ENCODE measurements at regions of chr11 and their contacts with region 1.

Region 1: GRCh38 chr11:63478896-63479295 is 12.1 kb downstream of the PLAAT5 start:
- DNase-seq: peak; percentile 23 to 78 (median 56)
- ATAC-seq: peak; percentile 78
- H3K4me3 ChIP-seq: no peak overlapping the region
- H3K4me3 Mint-ChIP-seq: no peak overlapping the region
- H3K27ac ChIP-seq: no peak overlapping the region
- H3K27ac Mint-ChIP-seq: no peak overlapping the region
- H3K4me1 ChIP-seq: peaks cover 3% of the 10 kb centered on the region
- H3K4me1 Mint-ChIP-seq: no peaks in the 10 kb centered on the region
- H3K27me3 ChIP-seq: no peaks in the 10 kb centered on the region
- H3K27me3 Mint-ChIP-seq: no peaks in the 10 kb centered on the region
- CTCF ChIP-seq: peak; percentile 91

Region 2: DNA sequence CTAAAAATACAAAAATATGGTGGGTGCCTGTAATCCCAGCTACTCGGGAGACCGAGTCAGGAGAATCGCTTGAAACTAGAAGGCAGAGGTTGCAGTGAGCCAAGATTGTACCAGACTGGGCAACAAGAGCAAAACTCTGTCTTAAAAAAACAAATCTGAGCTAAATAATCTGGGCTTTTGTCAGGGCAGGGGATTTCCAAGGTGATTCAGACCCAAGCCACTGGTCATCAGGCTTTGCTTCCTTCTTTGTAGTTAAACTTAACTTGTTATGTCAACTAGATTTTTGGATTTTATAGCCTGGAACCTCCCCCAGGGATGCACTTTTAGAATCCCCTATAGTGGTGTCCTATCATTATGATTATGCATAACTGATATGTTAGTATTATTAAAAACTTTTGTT is 436.3 kb before region 1 on chr11:
- CTCF ChIA-PET with region 1: no interaction called
- POLR2A ChIA-PET with region 1: no interaction called
- intact Hi-C with region 1: loop called (anchors 5 to 10 kb)
- DNase-seq: no peak
- ATAC-seq: no peak
- H3K4me3 ChIP-seq: no peak overlapping the region
- H3K4me3 Mint-ChIP-seq: no peak overlapping the region
- H3K27ac ChIP-seq: no peak overlapping the region
- H3K27ac Mint-ChIP-seq: no peak overlapping the region
- H3K4me1 ChIP-seq: no peaks in the 10 kb centered on the region
- H3K4me1 Mint-ChIP-seq: no peaks in the 10 kb centered on the region
- H3K27me3 ChIP-seq: no peaks in the 10 kb centered on the region
- H3K27me3 Mint-ChIP-seq: peaks cover 18% of the 10 kb centered on the region
- CTCF ChIP-seq: no peak

Region 3: GRCh38 chr11:63406458-63406857 is 72.4 kb before region 1 on chr11:
- CTCF ChIA-PET with region 1: no interaction called
- POLR2A ChIA-PET with region 1: no interaction called
- intact Hi-C with region 1: no loop called
- DNase-seq: no peak
- ATAC-seq: no peak
- H3K4me3 ChIP-seq: no peak overlapping the region
- H3K4me3 Mint-ChIP-seq: no peak overlapping the region
- H3K27ac ChIP-seq: no peak overlapping the region
- H3K27ac Mint-ChIP-seq: no peak overlapping the region
- H3K4me1 ChIP-seq: no peaks in the 10 kb centered on the region
- H3K4me1 Mint-ChIP-seq: no peaks in the 10 kb centered on the region
- H3K27me3 ChIP-seq: no peaks in the 10 kb centered on the region
- H3K27me3 Mint-ChIP-seq: peaks cover 14% of the 10 kb centered on the region
- CTCF ChIP-seq: no peak

Region 4: GRCh38 chr11:63508009-63508408 is 29.1 kb after region 1 on chr11:
- CTCF ChIA-PET with region 1: interaction called, 15 read pairs
- POLR2A ChIA-PET with region 1: interaction called, 3 read pairs
- intact Hi-C with region 1: no loop called
- DNase-seq: peak in 2 of 9 experiments; percentile 16 to 20
- ATAC-seq: no peak
- H3K4me3 ChIP-seq: no peak overlapping the region
- H3K4me3 Mint-ChIP-seq: no peak overlapping the region
- H3K27ac ChIP-seq: no peak overlapping the region
- H3K27ac Mint-ChIP-seq: no peak overlapping the region
- H3K4me1 ChIP-seq: no peaks in the 10 kb centered on the region
- H3K4me1 Mint-ChIP-seq: peaks cover 2% of the 10 kb centered on the region
- H3K27me3 ChIP-seq: no peaks in the 10 kb centered on the region
- H3K27me3 Mint-ChIP-seq: no peaks in the 10 kb centered on the region
- CTCF ChIP-seq: no peak

Region 5: DNA sequence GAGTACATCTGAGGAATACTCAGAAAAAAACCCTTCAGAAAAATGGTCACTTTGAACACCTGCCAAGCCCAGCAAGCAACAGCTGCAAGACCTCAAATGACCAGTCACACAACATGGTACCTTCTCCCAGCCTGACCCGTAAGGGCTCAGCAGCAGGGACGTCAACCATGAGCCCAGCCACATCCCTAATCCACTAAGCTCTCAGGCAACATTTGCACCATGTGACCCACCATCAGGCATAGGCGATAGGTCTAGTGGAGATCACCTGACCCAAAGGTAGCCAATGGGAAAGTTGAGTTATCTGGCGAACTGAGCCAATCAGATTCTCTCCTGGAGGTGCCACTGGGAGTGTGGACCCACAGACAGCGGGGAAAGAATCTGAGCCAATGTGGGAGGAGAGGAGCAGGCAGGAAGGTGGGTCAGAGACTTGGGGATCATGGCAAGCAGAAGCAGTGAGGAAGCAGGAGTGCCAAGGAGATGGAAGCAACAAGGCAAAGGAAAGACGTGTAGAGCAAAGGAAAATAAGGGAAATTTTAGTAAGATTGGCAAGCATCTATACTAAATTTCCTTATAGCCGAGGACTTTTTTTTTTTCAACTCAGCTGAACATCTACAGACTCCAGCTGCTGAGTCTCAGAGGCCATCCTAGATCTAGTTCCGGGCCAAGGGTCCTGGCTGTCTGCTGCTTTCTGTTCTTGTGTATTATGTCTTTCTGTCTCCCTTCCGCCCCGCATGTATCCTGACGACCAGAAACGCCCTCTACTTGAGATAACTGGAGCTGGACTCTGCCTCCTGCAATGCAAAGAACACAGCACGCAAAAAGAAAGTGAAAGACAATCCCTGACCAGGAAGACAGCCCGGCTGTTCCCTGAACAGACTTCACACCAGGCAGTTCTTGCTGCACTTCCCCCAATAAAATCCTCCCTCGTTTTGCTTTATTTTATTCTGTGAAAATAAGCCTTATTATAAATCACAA is 95.3 kb after region 1 on chr11:
- CTCF ChIA-PET with region 1: interaction called, 8 read pairs
- POLR2A ChIA-PET with region 1: no interaction called
- intact Hi-C with region 1: loop called in 1 of 2 experiments (anchors 2 kb)
- DNase-seq: peak in 8 of 9 experiments; percentile 21 to 84 (median 38)
- ATAC-seq: peak; percentile 71
- H3K4me3 ChIP-seq: peak overlapping the region; percentile 21 to 41
- H3K4me3 Mint-ChIP-seq: peak overlapping the region; percentile 87
- H3K27ac ChIP-seq: peak overlapping the region; percentile 2 to 50
- H3K27ac Mint-ChIP-seq: peak overlapping the region; percentile 90
- H3K4me1 ChIP-seq: peaks cover 14% of the 10 kb centered on the region
- H3K4me1 Mint-ChIP-seq: peaks cover 29% of the 10 kb centered on the region
- H3K27me3 ChIP-seq: no peaks in the 10 kb centered on the region
- H3K27me3 Mint-ChIP-seq: no peaks in the 10 kb centered on the region
- CTCF ChIP-seq: no peak

Region 6: DNA sequence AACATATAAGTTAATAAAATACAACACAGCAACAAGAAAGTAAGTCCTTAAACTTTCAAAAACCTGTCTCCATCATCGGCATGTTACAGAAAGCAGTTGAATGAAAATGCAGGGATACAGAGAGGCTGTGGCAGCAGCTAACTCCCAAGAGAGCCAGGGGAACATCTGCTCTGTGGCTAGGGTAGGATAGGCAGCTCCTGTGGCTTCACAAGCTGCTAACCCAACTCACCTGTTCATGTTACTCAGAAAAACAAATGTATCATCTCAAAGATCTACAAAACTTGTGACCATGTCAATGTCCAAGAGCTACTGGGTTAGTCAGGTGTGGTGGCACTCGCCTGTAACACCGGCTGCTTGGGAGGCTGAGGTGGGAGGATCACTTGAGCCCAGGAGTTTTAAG is 150.5 kb after region 1 on chr11:
- CTCF ChIA-PET with region 1: interaction called, 228 read pairs
- POLR2A ChIA-PET with region 1: no interaction called
- intact Hi-C with region 1: no loop called
- DNase-seq: no peak
- ATAC-seq: no peak
- H3K4me3 ChIP-seq: no peak overlapping the region
- H3K4me3 Mint-ChIP-seq: no peak overlapping the region
- H3K27ac ChIP-seq: no peak overlapping the region
- H3K27ac Mint-ChIP-seq: no peak overlapping the region
- H3K4me1 ChIP-seq: no peaks in the 10 kb centered on the region
- H3K4me1 Mint-ChIP-seq: no peaks in the 10 kb centered on the region
- H3K27me3 ChIP-seq: no peaks in the 10 kb centered on the region
- H3K27me3 Mint-ChIP-seq: no peaks in the 10 kb centered on the region
- CTCF ChIP-seq: no peak

Region 7: GRCh38 chr11:63738720-63739360 is 259.9 kb after region 1 on chr11:
- CTCF ChIA-PET with region 1: interaction called, 52 read pairs
- POLR2A ChIA-PET with region 1: no interaction called
- intact Hi-C with region 1: loop called (anchors 1 to 2 kb)
- DNase-seq: peak; percentile 25 to 76 (median 66)
- ATAC-seq: no peak
- H3K4me3 ChIP-seq: no peak overlapping the region
- H3K4me3 Mint-ChIP-seq: no peak overlapping the region
- H3K27ac ChIP-seq: no peak overlapping the region
- H3K27ac Mint-ChIP-seq: no peak overlapping the region
- H3K4me1 ChIP-seq: no peaks in the 10 kb centered on the region
- H3K4me1 Mint-ChIP-seq: peaks cover 2% of the 10 kb centered on the region
- H3K27me3 ChIP-seq: no peaks in the 10 kb centered on the region
- H3K27me3 Mint-ChIP-seq: no peaks in the 10 kb centered on the region
- CTCF ChIP-seq: peak; percentile 100

Measured in CD8-positive, alpha-beta T cell (primary cell).